ENCODE measurements at regions of chr16 and their contacts with region 1.

Region 1: GRCh38 chr16:69709456-69710084 is 16.8 kb downstream of the NQO1 start:
- DNase-seq: no peak
- ATAC-seq: peak; percentile 47

Region 2: DNA sequence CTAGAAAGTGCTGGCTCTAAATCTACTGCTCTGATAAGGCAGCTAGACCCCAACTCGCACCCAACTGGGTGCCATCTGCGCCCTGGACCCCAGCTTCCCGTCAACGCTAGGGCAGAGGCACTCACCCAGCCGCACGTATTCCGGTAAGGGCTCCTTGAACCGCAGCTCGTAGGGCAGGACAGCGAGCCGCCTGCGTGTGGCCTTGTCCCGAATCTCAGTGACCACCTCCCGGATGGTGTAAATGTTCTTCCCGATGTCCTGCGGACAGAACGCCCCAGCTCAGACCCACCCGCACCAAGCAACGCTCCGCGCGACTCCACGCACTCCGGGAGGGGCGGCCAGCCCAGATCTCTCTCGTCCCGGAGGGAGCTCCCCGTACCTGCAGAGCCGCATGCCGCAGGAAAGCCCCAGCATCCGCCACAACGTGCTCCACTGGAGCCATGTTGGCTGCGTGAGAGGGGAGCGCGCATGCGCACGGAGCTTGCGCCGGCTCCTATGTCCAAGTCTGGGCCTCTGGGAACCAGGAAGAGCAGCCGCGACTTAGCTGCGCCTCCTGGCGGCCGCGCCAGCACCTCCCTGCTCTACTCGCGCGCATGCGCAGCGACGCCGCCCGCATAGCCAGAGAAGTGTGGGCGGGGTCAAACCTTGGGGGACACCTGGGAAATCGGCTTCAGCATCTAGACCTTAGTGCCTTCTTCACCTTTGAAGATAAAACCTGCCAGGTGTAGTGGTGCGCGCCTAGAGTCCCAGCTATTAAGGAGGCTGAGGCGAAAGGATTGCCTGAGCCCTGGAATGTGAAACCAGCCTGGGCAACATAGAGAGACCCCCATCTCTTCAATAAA is 45.1 kb after region 1 on chr16 and contains the start of gene NOB1:
- intact Hi-C with region 1: loop called (anchors 10 kb)
- DNase-seq: peak; percentile 99
- ATAC-seq: peak; percentile 98
- total RNA-seq, gene NOB1: 16.8 TPM